ENCODE measurements at regions of chr5 and their contacts with region 1.

Region 1: GRCh38 chr5:135426102-135427082 is 20.8 kb downstream of the DCANP1 start:
- DNase-seq: peak in 4 of 5 donors; percentile 19 to 30 (median 24)
- H3K4me3 ChIP-seq: no peak overlapping the region
- H3K4me3 Mint-ChIP-seq: no peak overlapping the region
- H3K27ac ChIP-seq: no peak overlapping the region
- H3K27ac Mint-ChIP-seq: no peak overlapping the region
- H3K4me1 ChIP-seq: no peaks in the 10 kb centered on the region
- H3K4me1 Mint-ChIP-seq: peaks cover 0 to 3% (median 0%) of the 10 kb centered on the region in 4 donors
- H3K27me3 ChIP-seq: peaks cover 6% of the 10 kb centered on the region
- H3K27me3 Mint-ChIP-seq: peaks cover 21 to 23% of the 10 kb centered on the region in 2 donors

Region 2: DNA sequence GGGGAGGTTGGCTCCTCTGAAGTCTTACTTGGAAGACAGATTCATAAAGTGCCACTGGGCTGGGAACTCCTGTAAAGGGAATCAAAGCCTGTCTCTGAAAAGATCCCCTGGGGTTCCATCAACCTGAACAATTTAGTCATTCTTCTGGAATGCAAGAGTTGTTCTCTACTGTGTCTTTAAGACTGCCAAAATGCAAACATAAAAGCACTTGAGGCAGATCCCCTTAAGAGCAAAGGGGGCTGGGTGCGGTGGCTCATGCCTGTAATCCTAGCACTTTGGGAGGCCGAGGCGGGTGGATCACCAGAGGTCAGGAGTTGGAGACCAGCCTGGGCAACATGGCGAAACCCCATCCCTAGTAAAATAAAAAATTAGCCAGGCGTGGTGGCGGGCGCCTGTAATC is 1031.5 kb before region 1 on chr5:
- CTCF ChIA-PET with region 1: no interaction called
- POLR2A ChIA-PET with region 1: no interaction called
- intact Hi-C with region 1: no loop called
- DNase-seq: no peak
- H3K4me3 ChIP-seq: no peak overlapping the region
- H3K4me3 Mint-ChIP-seq: no peak overlapping the region
- H3K27ac ChIP-seq: no peak overlapping the region
- H3K27ac Mint-ChIP-seq: peak overlapping the region in 2 of 7 donors; percentile 48 to 57
- H3K4me1 ChIP-seq: no peaks in the 10 kb centered on the region
- H3K4me1 Mint-ChIP-seq: peaks cover 0 to 4% (median under 1%) of the 10 kb centered on the region in 4 donors
- H3K27me3 ChIP-seq: no peaks in the 10 kb centered on the region
- H3K27me3 Mint-ChIP-seq: no peaks in the 10 kb centered on the region

Region 3: GRCh38 chr5:135437796-135438560 is 11.6 kb after region 1 on chr5:
- CTCF ChIA-PET with region 1: interaction called, 30 read pairs
- POLR2A ChIA-PET with region 1: no interaction called
- intact Hi-C with region 1: no loop called
- DNase-seq: no peak
- H3K4me3 ChIP-seq: no peak overlapping the region
- H3K4me3 Mint-ChIP-seq: no peak overlapping the region
- H3K27ac ChIP-seq: no peak overlapping the region
- H3K27ac Mint-ChIP-seq: no peak overlapping the region
- H3K4me1 ChIP-seq: no peaks in the 10 kb centered on the region
- H3K4me1 Mint-ChIP-seq: no peaks in the 10 kb centered on the region
- H3K27me3 ChIP-seq: no peaks in the 10 kb centered on the region
- H3K27me3 Mint-ChIP-seq: peaks cover 6 to 10% of the 10 kb centered on the region in 2 donors

Region 4: GRCh38 chr5:135493406-135494180 is 67.2 kb after region 1 on chr5:
- CTCF ChIA-PET with region 1: no interaction called
- POLR2A ChIA-PET with region 1: no interaction called
- intact Hi-C with region 1: no loop called
- DNase-seq: no peak
- H3K4me3 ChIP-seq: no peak overlapping the region
- H3K4me3 Mint-ChIP-seq: no peak overlapping the region
- H3K27ac ChIP-seq: no peak overlapping the region
- H3K27ac Mint-ChIP-seq: no peak overlapping the region
- H3K4me1 ChIP-seq: no peaks in the 10 kb centered on the region
- H3K4me1 Mint-ChIP-seq: peaks cover 4 to 11% (median 6%) of the 10 kb centered on the region in 4 donors
- H3K27me3 ChIP-seq: peaks cover 10% of the 10 kb centered on the region
- H3K27me3 Mint-ChIP-seq: peaks cover 29 to 34% of the 10 kb centered on the region in 2 donors

Region 5: GRCh38 chr5:135739383-135739981 is 313.1 kb after region 1 on chr5:
- CTCF ChIA-PET with region 1: no interaction called
- POLR2A ChIA-PET with region 1: no interaction called
- intact Hi-C with region 1: no loop called
- DNase-seq: no peak
- H3K4me3 ChIP-seq: no peak overlapping the region
- H3K4me3 Mint-ChIP-seq: no peak overlapping the region
- H3K27ac ChIP-seq: no peak overlapping the region
- H3K27ac Mint-ChIP-seq: no peak overlapping the region
- H3K4me1 ChIP-seq: no peaks in the 10 kb centered on the region
- H3K4me1 Mint-ChIP-seq: no peaks in the 10 kb centered on the region
- H3K27me3 ChIP-seq: no peaks in the 10 kb centered on the region
- H3K27me3 Mint-ChIP-seq: peaks cover 5 to 7% of the 10 kb centered on the region in 2 donors